ENCODE measurements at regions of chr4 and their contacts with region 1.

Region 1: DNA sequence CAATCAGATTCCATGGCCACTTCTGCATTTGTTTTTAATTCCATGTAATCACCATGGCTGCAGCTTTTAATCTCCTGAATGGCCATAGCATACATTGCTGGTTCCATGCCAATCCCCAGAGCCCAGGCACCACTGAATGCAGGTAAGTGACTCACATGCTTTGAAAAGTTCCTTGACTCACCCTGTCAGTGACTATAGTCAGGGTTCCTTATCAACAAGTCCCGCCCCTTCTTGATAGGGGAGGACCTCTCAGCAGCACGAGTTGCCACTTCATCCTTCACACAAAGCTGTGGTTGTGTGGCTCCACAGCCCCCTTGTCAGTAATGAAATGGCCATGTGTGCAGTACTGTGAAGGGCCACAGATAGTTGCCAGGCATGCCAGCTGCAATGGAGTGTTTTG is 516.6 kb downstream of the PPARGC1A start:
- DNase-seq: peak; percentile 41 to 65
- ATAC-seq: peak; percentile 67 to 76
- H3K4me3 ChIP-seq: no peak overlapping the region
- H3K27ac ChIP-seq: peak overlapping the region; percentile 75 to 82 (median 80)
- H3K4me1 ChIP-seq: peaks cover 28 to 32% of the 10 kb centered on the region in 2 donors
- H3K27me3 ChIP-seq: no peaks in the 10 kb centered on the region
- CTCF ChIP-seq: peak in 1 of 5 experiments; percentile 9
- POLR2A ChIP-seq: peak in 1 of 2 donors; percentile 17

Region 2: GRCh38 chr4:23384741-23385140 is 11.5 kb after region 1 on chr4:
- in situ Hi-C with region 1: no loop called
- intact Hi-C with region 1: loop called (anchors 2 kb)
- DNase-seq: no peak
- ATAC-seq: no peak
- H3K4me3 ChIP-seq: no peak overlapping the region
- H3K27ac ChIP-seq: peak overlapping the region; percentile 6 to 89 (median 88)
- H3K4me1 ChIP-seq: peaks cover 38 to 50% of the 10 kb centered on the region in 2 donors
- H3K27me3 ChIP-seq: no peaks in the 10 kb centered on the region
- CTCF ChIP-seq: no peak
- POLR2A ChIP-seq: no peak

Region 3: GRCh38 chr4:23889814-23890341 is 516.6 kb after region 1 on chr4 and contains the start of gene PPARGC1A:
- in situ Hi-C with region 1: no loop called
- intact Hi-C with region 1: loop called (anchors 10 kb)
- DNase-seq: peak; percentile 86 to 94
- ATAC-seq: peak; percentile 80 to 84
- H3K4me3 ChIP-seq: peak within 1 kb of the TSS; percentile 65 to 77 (median 69)
- H3K27ac ChIP-seq: peak within 1 kb of the TSS; percentile 84 to 99 (median 90)
- H3K4me1 ChIP-seq: peaks cover 27 to 42% of the 10 kb centered on the region in 2 donors
- H3K27me3 ChIP-seq: no peaks in the 10 kb centered on the region
- CTCF ChIP-seq: no peak
- POLR2A ChIP-seq: peak; percentile 96 to 98
- total RNA-seq, gene PPARGC1A: 30.6 to 68.9 (median 52.3) TPM

Region 4: DNA sequence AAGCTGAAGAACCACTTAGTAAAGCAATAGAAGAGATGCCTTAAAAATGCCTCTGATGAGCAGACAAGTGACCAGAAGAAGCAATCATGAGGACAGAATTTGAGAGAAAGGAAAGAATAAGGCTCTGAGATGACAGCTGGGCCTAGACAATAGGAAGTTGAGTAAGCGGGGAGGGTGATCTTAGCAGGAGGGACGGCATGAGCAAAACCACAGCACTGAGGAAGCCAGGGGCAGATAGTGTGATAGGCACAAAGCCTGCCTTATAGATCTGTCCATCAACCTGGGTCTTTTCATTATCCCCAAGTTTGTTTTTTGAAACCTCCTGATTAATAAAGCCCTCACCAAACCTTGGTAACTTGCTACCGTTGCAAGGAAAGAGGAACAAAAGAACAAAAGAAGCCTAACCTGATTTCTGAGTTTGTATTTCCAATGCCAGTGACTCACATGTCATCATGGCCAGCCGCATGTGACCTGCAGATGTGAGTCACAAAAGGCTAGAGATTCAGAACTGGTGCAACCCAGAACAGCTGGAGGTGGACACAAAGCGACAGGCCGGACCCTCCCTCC is 572.3 kb after region 1 on chr4:
- in situ Hi-C with region 1: loop called in 1 of 4 experiments (anchors 25 kb)
- intact Hi-C with region 1: loop called (anchors 5 kb)
- DNase-seq: peak; percentile 65 to 81
- ATAC-seq: peak; percentile 90 to 93
- H3K4me3 ChIP-seq: no peak overlapping the region
- H3K27ac ChIP-seq: peak overlapping the region; percentile 71 to 85 (median 78)
- H3K4me1 ChIP-seq: peaks cover 13 to 45% of the 10 kb centered on the region in 2 donors
- H3K27me3 ChIP-seq: no peaks in the 10 kb centered on the region
- CTCF ChIP-seq: no peak
- POLR2A ChIP-seq: peak; percentile 36 to 45

Region 5: GRCh38 chr4:24244663-24245490 is 871.6 kb after region 1 on chr4:
- in situ Hi-C with region 1: loop called in 1 of 4 experiments (anchors 25 kb)
- intact Hi-C with region 1: loop called (anchors 10 kb)
- DNase-seq: peak; percentile 70 to 83
- ATAC-seq: peak; percentile 90 to 92
- H3K4me3 ChIP-seq: no peak overlapping the region
- H3K27ac ChIP-seq: peak overlapping the region; percentile 83 to 90 (median 86)
- H3K4me1 ChIP-seq: peaks cover 40 to 44% of the 10 kb centered on the region in 2 donors
- H3K27me3 ChIP-seq: no peaks in the 10 kb centered on the region
- CTCF ChIP-seq: no peak
- POLR2A ChIP-seq: peak in 1 of 2 donors; percentile 23

Region 6: GRCh38 chr4:24472514-24473308 is 1099.5 kb after region 1 on chr4:
- in situ Hi-C with region 1: no loop called
- intact Hi-C with region 1: loop called (anchors 5 kb)
- DNase-seq: peak; percentile 79 to 82
- ATAC-seq: peak; percentile 83 to 84
- H3K4me3 ChIP-seq: peak overlapping the region; percentile 67 to 81 (median 71)
- H3K27ac ChIP-seq: peak overlapping the region; percentile 71 to 84 (median 81)
- H3K4me1 ChIP-seq: peaks cover 10 to 20% of the 10 kb centered on the region in 2 donors
- H3K27me3 ChIP-seq: peaks cover 0 to 4% (median 3%) of the 10 kb centered on the region in 3 donors
- CTCF ChIP-seq: peak; percentile 74 to 87 (median 78)
- POLR2A ChIP-seq: peak in 1 of 2 donors; percentile 55